ENCODE measurements at regions of chr7 and their contacts with region 1.

Region 1: GRCh38 chr7:12067141-12067831 is 143.8 kb upstream of the TMEM106B start:
- DNase-seq: peak; percentile 59 to 78
- H3K4me3 ChIP-seq: no peak overlapping the region
- H3K4me3 Mint-ChIP-seq: no peak overlapping the region
- H3K27ac Mint-ChIP-seq: peak overlapping the region; percentile 43
- H3K4me1 ChIP-seq: peaks cover 12% of the 10 kb centered on the region; the same call in 1 of the 2 replicates
- H3K4me1 Mint-ChIP-seq: peaks cover 13% of the 10 kb centered on the region
- H3K27me3 ChIP-seq: no peaks in the 10 kb centered on the region
- H3K27me3 Mint-ChIP-seq: no peaks in the 10 kb centered on the region
- CTCF ChIP-seq: peak; percentile 77 to 84

Region 2: GRCh38 chr7:11427686-11428273 is 639.5 kb before region 1 on chr7:
- CTCF ChIA-PET with region 1: no interaction called
- POLR2A ChIA-PET with region 1: no interaction called
- intact Hi-C with region 1: loop called (anchors 2 kb)
- DNase-seq: peak in 1 of 2 experiments; percentile 24
- H3K4me3 ChIP-seq: no peak overlapping the region
- H3K4me3 Mint-ChIP-seq: no peak overlapping the region
- H3K27ac Mint-ChIP-seq: no peak overlapping the region
- H3K4me1 ChIP-seq: no peaks in the 10 kb centered on the region
- H3K4me1 Mint-ChIP-seq: no peaks in the 10 kb centered on the region
- H3K27me3 ChIP-seq: no peaks in the 10 kb centered on the region
- H3K27me3 Mint-ChIP-seq: no peaks in the 10 kb centered on the region
- CTCF ChIP-seq: peak; percentile 72 to 78

Region 3: DNA sequence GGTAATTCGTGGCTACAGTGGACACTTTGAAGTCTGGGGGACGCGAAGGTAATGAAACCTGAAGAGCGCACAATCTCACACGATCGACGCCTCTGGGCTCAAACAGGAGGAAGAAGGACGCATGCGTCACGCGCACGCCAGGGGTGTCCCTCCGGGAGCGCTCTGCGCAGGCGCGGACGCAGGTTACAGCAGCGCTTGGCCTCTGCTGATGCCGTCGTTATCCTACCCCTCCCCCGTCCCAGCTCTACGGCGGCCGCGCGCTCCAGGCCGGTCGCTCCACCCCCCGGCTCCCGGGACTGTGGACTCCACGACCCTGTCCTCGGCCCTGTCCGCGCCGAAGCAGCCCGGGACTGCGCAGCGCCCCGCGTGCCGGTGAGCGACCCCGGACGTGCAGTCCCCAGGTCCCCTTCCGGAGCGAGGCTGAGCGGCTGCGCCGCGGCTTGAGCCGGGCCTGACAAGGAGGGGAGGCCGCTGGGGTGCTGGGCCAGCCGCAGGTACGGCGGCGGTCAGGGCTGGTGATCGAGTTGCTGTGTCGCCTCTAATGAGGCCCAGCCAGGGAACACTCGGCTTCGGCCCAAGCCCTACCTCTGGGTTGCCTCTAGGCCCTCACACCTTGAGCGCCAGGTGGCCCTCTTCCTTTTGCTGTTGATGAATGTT is 143.9 kb after region 1 on chr7 and contains the start of gene TMEM106B:
- CTCF ChIA-PET with region 1: no interaction called
- POLR2A ChIA-PET with region 1: no interaction called
- intact Hi-C with region 1: loop called (anchors 1 kb)
- DNase-seq: peak; percentile 97 to 98
- H3K4me3 ChIP-seq: peak within 1 kb of the TSS; percentile 76
- H3K4me3 Mint-ChIP-seq: peak within 1 kb of the TSS; percentile 90
- H3K27ac Mint-ChIP-seq: peak within 1 kb of the TSS; percentile 92
- H3K4me1 ChIP-seq: peaks cover 4% of the 10 kb centered on the region; the same call in 1 of the 2 replicates
- H3K4me1 Mint-ChIP-seq: peaks cover 7% of the 10 kb centered on the region
- H3K27me3 ChIP-seq: no peaks in the 10 kb centered on the region
- H3K27me3 Mint-ChIP-seq: no peaks in the 10 kb centered on the region
- CTCF ChIP-seq: peak in 1 of 2 experiments; percentile 35
- total RNA-seq, gene TMEM106B: 38.6 and 46.8 TPM in 2 replicates

Region 4: GRCh38 chr7:12291870-12292269 is 224.6 kb after region 1 on chr7:
- CTCF ChIA-PET with region 1: no interaction called
- POLR2A ChIA-PET with region 1: no interaction called
- intact Hi-C with region 1: loop called (anchors 1 kb)
- DNase-seq: peak in 1 of 2 experiments; percentile 26
- H3K4me3 ChIP-seq: no peak overlapping the region
- H3K4me3 Mint-ChIP-seq: no peak overlapping the region
- H3K27ac Mint-ChIP-seq: no peak overlapping the region
- H3K4me1 ChIP-seq: no peaks in the 10 kb centered on the region
- H3K4me1 Mint-ChIP-seq: no peaks in the 10 kb centered on the region
- H3K27me3 ChIP-seq: no peaks in the 10 kb centered on the region
- H3K27me3 Mint-ChIP-seq: no peaks in the 10 kb centered on the region
- CTCF ChIP-seq: peak in 1 of 2 experiments; percentile 19

Region 5: GRCh38 chr7:12490117-12490688 is 422.9 kb after region 1 on chr7:
- CTCF ChIA-PET with region 1: no interaction called
- POLR2A ChIA-PET with region 1: no interaction called
- intact Hi-C with region 1: loop called (anchors 1 kb)
- DNase-seq: no peak
- H3K4me3 ChIP-seq: no peak overlapping the region
- H3K4me3 Mint-ChIP-seq: no peak overlapping the region
- H3K27ac Mint-ChIP-seq: no peak overlapping the region
- H3K4me1 ChIP-seq: no peaks in the 10 kb centered on the region
- H3K4me1 Mint-ChIP-seq: no peaks in the 10 kb centered on the region
- H3K27me3 ChIP-seq: no peaks in the 10 kb centered on the region
- H3K27me3 Mint-ChIP-seq: peaks cover 5% of the 10 kb centered on the region
- CTCF ChIP-seq: peak; percentile 37 to 59